ENCODE measurements at regions of chr11 and their contacts with region 1.

Region 1: DNA sequence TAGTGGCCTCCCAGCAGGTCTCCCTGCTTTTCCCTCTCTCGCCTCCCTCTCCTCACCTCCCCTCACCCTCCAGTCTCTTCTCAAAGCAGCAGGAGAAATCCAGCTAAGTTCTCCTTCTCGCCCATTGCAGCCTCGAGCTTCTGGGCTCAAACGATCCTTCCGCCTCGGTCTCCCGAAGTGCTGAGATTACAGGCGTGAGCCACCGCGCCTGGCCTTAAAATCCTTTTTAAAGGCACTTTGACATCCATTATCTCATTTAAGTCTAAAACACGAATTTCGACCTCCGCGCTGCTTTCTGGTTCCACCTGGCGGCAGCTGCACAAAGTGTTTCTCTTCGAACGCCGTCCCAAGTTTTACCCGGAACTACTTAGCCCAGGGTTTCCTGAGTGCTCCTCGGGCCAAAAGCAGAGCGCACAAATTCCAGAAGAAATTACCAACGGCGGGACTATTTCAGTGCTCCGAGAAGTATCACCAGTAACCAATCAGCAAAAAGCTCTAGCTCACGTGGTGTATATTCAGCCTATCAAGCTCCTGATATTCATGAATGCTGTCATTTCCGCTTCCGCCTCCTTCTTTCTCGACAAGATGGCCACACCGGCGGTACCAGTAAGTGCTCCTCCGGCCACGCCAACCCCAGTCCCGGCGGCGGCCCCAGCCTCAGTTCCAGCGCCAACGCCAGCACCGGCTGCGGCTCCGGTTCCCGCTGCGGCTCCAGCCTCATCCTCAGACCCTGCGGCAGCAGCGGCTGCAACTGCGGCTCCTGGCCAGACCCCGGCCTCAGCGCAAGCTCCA is at the start of gene EIF3F:
- DNase-seq: peak; percentile 87
- ATAC-seq: peak; percentile 99
- H3K4me3 ChIP-seq: peak within 1 kb of the TSS; percentile 84
- H3K27ac ChIP-seq: peak within 1 kb of the TSS; percentile 82
- H3K4me1 ChIP-seq: peaks cover 33% of the 10 kb centered on the region
- H3K27me3 ChIP-seq: no peaks in the 10 kb centered on the region
- CTCF ChIP-seq: peak; percentile 88
- total RNA-seq, gene EIF3F: 201 TPM

Region 2: DNA sequence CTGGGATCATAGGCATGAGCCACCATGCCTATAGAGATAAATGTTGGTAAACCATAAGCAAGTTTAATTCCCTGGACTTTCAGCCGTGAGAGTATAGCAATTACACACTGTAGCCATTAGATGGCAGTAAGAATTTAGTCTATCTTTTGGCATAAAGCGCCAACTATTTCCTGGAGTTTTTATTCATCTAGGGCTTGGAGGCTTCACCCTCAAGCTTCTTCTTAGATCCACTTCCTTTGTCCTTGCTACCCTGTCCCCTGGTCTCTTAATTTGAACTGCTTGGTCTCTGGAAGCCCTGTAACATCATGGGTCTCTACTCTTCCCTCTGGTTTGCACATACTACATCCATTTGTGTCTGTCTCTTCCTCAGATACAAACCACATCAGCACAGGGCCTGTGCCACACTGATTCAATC is 94.1 kb before region 1 on chr11:
- intact Hi-C with region 1: loop called (anchors 5 kb)
- DNase-seq: no peak
- ATAC-seq: peak; percentile 78 to 84
- H3K4me3 ChIP-seq: no peak overlapping the region
- H3K27ac ChIP-seq: no peak overlapping the region
- H3K4me1 ChIP-seq: peaks cover 13% of the 10 kb centered on the region
- H3K27me3 ChIP-seq: no peaks in the 10 kb centered on the region
- CTCF ChIP-seq: peak; percentile 66

Measured in lower lobe of right lung (tissue), 2 donors.